ENCODE measurements at regions of chr4 and their contacts with region 1.

Region 1: DNA sequence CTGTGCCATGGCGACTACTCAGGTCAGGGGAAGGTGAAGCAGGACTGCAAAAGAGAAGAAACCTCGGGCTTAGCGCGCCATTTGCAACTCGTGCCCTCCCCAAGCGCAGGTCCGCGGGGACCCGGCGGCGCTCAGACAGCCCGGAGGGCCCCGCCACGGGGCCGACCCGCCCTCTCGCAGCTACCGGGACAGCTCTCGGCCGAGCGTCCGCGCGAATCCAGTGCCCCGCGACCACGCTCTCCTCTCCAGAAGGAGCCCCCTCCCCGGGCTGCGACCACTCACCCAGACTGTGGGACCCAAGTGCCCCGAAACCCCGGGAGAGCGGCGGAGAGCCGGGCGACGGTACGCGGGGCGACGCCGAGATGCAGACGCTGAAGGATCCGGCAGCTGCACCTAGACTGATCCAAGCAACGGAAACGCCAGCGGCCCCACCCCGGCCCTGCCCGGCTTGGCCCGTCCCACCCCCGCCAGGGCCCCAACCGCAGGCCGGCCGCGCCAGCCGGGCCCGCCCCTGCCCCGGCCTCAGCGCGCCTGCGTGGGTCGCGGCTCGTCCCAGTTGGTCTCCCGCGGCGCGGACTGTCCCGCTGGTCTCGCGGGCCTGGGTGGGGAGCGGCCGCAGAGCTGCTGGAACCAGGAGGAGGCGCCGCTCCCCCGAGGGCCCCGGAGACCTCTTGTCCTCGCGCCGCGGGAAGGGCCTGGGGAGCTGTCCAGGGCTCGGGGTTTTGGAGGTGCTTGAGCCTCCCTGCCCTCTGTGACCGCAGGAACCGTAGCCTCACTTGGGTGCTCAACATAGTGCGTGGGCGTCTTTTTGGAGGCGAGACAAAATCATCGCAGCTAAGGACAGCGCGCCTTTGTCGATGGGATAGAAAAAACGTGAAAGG is at the start of gene ANXA5:
- DNase-seq: peak; percentile 63 to 90 (median 72)
- H3K4me3 ChIP-seq: peak within 1 kb of the TSS; percentile 55 to 98 (median 89)
- H3K27ac ChIP-seq: peak within 1 kb of the TSS; percentile 52 to 98 (median 89)
- H3K27me3 ChIP-seq: no peaks in the 10 kb centered on the region
- CTCF ChIP-seq: peak in 47 of 56 donors; percentile 14 to 68 (median 42)
- total RNA-seq, gene ANXA5: 48.4 to 141 (median 84.7) TPM

Region 2: GRCh38 chr4:121656269-121656641 is 40.6 kb before region 1 on chr4:
- intact Hi-C with region 1: no loop called
- DNase-seq: peak in 7 of 10 donors; percentile 20 to 74 (median 45)
- H3K4me3 ChIP-seq: no peak overlapping the region
- H3K27ac ChIP-seq: no peak overlapping the region
- H3K27me3 ChIP-seq: no peaks in the 10 kb centered on the region
- CTCF ChIP-seq: peak in 47 of 56 donors; percentile 13 to 69 (median 38)

Region 3: GRCh38 chr4:121784975-121785374 is 88.2 kb after region 1 on chr4:
- intact Hi-C with region 1: loop called in 1 of 2 experiments (anchors 5 kb)
- DNase-seq: no peak
- H3K4me3 ChIP-seq: no peak overlapping the region
- H3K27ac ChIP-seq: peak overlapping the region in 38 of 59 donors; percentile 3 to 76 (median 53)
- H3K27me3 ChIP-seq: peaks cover 0 to 4% (median 0%) of the 10 kb centered on the region in 45 donors
- CTCF ChIP-seq: no peak

Region 4: DNA sequence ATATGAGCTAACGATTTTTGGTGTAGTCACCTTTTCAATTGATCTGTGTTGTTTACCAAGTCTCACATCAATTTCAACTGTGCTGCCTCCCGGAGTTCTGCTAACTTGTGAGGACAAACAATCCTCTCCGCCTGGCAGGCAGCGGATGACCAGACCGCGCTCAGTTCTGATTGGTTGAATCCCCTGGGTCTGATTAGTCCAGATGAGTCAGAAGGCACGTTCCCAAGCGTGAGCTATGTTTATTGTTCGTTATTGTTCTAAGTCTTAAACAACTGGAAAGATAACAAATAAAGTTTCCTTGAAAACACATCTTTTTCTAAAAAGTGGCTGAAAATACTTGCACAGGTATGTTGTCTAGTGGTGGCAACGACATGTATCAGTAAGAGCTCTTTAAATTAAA is 292.9 kb after region 1 on chr4:
- intact Hi-C with region 1: no loop called
- DNase-seq: no peak
- H3K4me3 ChIP-seq: no peak overlapping the region
- H3K27ac ChIP-seq: no peak overlapping the region
- H3K27me3 ChIP-seq: no peaks in the 10 kb centered on the region
- CTCF ChIP-seq: no peak

Measured in dorsolateral prefrontal cortex (tissue), 120 donors.